ENCODE measurements at regions of chr3 and their contacts with region 1.

Region 1: GRCh38 chr3:146577662-146578061 is 27.5 kb downstream of the PLSCR5 start:
- DNase-seq: peak in 4 of 5 donors; percentile 27 to 35 (median 29)
- H3K4me3 ChIP-seq: no peak overlapping the region
- H3K4me3 Mint-ChIP-seq: no peak overlapping the region
- H3K27ac ChIP-seq: no peak overlapping the region
- H3K27ac Mint-ChIP-seq: no peak overlapping the region
- H3K4me1 ChIP-seq: no peaks in the 10 kb centered on the region
- H3K4me1 Mint-ChIP-seq: no peaks in the 10 kb centered on the region
- H3K27me3 ChIP-seq: no peaks in the 10 kb centered on the region
- H3K27me3 Mint-ChIP-seq: no peaks in the 10 kb centered on the region

Region 2: GRCh38 chr3:146065573-146066006 is 512.1 kb before region 1 on chr3:
- CTCF ChIA-PET with region 1: interaction called, 4 read pairs
- POLR2A ChIA-PET with region 1: no interaction called
- intact Hi-C with region 1: loop called (anchors 1 kb)
- DNase-seq: peak in 1 of 5 donors; percentile 14
- H3K4me3 ChIP-seq: no peak overlapping the region
- H3K4me3 Mint-ChIP-seq: no peak overlapping the region
- H3K27ac ChIP-seq: no peak overlapping the region
- H3K27ac Mint-ChIP-seq: no peak overlapping the region
- H3K4me1 ChIP-seq: no peaks in the 10 kb centered on the region
- H3K4me1 Mint-ChIP-seq: no peaks in the 10 kb centered on the region
- H3K27me3 ChIP-seq: no peaks in the 10 kb centered on the region
- H3K27me3 Mint-ChIP-seq: no peaks in the 10 kb centered on the region

Region 3: DNA sequence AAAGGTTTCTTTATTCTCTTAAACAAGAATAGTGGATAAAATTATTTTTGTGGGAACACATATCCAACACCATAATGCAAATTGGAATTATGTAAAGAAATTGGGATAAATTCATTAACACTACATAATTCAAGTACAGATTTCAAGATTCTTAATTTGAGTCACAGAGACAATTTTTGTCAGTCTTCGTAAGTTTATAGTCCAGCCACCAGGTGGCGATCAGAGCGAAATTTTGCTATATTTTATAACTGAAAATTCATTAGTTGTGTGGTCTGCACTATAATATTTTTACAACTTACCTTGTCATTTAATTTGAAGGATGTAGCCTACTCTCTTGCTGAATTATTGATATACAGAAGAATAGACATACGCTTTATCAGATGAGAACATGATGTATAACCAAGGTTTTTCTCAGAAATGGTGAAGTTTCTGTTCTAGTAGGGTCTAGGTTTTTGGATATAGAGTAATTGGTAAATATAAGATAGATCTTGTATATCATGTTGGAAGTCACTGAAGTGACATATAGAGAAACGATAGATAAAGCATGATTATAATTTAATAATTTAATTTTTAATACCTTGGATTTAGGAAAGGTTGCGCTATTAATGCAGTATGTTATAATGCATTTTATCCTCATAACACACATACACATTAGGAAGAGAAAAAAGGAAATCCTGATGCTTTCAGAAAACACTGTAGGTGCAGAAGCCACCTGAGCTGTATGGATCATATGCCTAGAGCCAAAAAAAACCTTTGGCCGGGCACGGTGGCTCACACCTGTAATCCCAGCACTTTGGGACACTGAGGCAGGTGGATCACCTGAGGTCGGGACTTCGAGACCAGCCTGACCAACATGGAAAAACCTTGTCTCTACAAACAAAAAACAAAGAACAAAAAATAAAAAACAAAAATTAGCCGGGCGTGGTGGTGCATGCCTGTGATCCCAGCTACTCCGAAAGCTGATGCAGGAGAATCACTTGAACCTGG is 358.5 kb before region 1 on chr3:
- CTCF ChIA-PET with region 1: interaction called, 12 read pairs
- POLR2A ChIA-PET with region 1: no interaction called
- intact Hi-C with region 1: loop called (anchors 1 kb)
- DNase-seq: peak in 4 of 5 donors; percentile 6 to 34 (median 16)
- H3K4me3 ChIP-seq: no peak overlapping the region
- H3K4me3 Mint-ChIP-seq: no peak overlapping the region
- H3K27ac ChIP-seq: no peak overlapping the region
- H3K27ac Mint-ChIP-seq: no peak overlapping the region
- H3K4me1 ChIP-seq: no peaks in the 10 kb centered on the region
- H3K4me1 Mint-ChIP-seq: peaks cover 0 to 2% (median 0%) of the 10 kb centered on the region in 4 donors
- H3K27me3 ChIP-seq: no peaks in the 10 kb centered on the region
- H3K27me3 Mint-ChIP-seq: peaks cover 2 to 17% of the 10 kb centered on the region in 2 donors

Region 4: DNA sequence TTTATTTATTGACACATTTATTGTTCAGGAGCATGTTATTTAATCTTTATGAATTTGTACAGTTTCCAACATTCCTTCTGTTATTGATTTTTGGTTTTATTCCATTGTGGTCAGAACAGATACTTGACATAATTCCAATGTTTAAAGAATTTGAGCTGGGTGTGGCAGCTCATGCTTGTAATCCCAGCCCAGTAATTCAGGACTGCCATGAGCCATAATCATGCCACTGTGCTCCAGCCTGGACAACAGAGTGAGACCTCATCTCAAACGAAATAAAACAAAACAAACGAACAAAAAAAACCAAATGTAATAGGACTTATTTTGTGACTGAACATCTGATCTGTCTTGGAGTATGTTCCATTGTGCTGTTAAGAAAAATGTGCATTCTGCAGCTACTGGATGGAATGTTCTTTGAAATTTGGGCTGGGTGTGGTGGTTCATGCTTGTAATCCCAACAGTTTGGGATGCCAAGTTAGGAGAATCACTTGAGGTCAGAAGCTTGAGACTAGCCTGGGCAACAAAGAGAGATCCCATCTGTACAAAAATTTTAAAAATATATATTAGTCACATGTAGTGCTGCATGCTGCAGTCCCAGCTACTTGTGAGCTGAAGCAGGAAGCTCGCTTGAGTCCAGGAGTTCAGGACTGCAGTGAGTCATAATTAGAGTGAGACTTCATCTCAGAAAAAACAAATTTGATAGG is 264.1 kb before region 1 on chr3:
- CTCF ChIA-PET with region 1: no interaction called
- POLR2A ChIA-PET with region 1: no interaction called
- intact Hi-C with region 1: no loop called
- DNase-seq: no peak
- H3K4me3 ChIP-seq: no peak overlapping the region
- H3K4me3 Mint-ChIP-seq: no peak overlapping the region
- H3K27ac ChIP-seq: no peak overlapping the region
- H3K27ac Mint-ChIP-seq: no peak overlapping the region
- H3K4me1 ChIP-seq: no peaks in the 10 kb centered on the region
- H3K4me1 Mint-ChIP-seq: no peaks in the 10 kb centered on the region
- H3K27me3 ChIP-seq: no peaks in the 10 kb centered on the region
- H3K27me3 Mint-ChIP-seq: peaks cover 0 to 5% of the 10 kb centered on the region in 2 donors

Region 5: GRCh38 chr3:147518465-147518864 is 940.8 kb after region 1 on chr3:
- CTCF ChIA-PET with region 1: no interaction called
- POLR2A ChIA-PET with region 1: no interaction called
- intact Hi-C with region 1: no loop called
- DNase-seq: no peak
- H3K4me3 ChIP-seq: no peak overlapping the region
- H3K4me3 Mint-ChIP-seq: no peak overlapping the region
- H3K27ac ChIP-seq: no peak overlapping the region
- H3K27ac Mint-ChIP-seq: no peak overlapping the region
- H3K4me1 ChIP-seq: no peaks in the 10 kb centered on the region
- H3K4me1 Mint-ChIP-seq: no peaks in the 10 kb centered on the region
- H3K27me3 ChIP-seq: no peaks in the 10 kb centered on the region
- H3K27me3 Mint-ChIP-seq: no peaks in the 10 kb centered on the region

Measured in CD4-positive, alpha-beta memory T cell (primary cell).